Activated CD8-positive, alpha-beta T cell treated with anti-CD3 and anti-CD28 coated beads, Interleukin-2, amount 10 ng/mL, durations not matched to agents 7 days and 5 days (primary cell): ENCODE measurements at regions of chr16 and their contacts with region 1.

Region 1: DNA sequence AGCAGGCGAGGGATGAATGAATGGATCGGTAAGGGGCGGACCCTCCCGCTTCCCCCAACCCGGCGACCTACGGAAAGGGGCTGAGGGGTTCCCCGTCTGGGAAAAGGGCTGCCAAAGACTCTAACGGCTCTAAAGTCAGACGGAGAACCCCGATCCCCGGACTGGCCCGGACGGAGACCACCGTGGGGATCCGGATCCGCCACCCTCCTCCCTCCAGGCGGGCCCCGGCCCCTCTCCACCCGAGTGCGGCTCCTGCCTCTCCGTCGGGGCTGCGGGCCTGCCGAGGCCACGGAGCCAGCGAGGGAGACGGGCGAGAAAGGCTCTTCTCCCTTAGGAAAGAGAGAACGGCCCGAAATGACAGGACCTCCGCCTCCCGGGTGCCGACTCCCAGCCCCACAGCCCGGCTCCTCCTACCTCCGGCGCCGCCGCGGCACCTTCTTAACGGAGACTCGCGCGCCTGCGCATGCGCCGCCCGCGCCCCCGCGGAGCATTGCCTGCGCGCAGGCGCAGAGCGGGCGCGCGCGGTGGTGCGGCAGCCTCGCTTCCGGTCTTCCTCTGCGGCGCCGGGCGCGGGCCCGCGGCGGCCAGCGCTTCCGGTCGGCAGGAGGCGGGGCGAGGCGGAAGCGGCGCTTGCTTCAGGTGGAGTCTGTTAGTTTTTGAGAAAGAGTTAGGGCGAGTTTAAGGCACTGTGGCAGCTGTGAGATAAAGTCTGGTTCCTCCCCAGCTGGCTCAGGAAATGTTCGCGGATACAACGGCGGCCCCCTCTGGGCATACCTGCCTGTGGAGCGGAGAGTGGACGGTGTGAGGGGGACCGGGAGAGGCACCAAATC is at the start of gene SLX4:
- DNase-seq: peak; percentile 92
- ATAC-seq: peak; percentile 91
- H3K4me3 Mint-ChIP-seq: peak within 1 kb of the TSS; percentile 97
- H3K27ac Mint-ChIP-seq: peak within 1 kb of the TSS; percentile 98
- H3K4me1 Mint-ChIP-seq: peaks cover 61% of the 10 kb centered on the region
- H3K27me3 Mint-ChIP-seq: no peaks in the 10 kb centered on the region
- total RNA-seq, gene SLX4: 16.3 to 16.5 TPM

Region 2: GRCh38 chr16:3578610-3579551 is 32.5 kb before region 1 on chr16:
- CTCF ChIA-PET with region 1: interaction called, 5 read pairs
- POLR2A ChIA-PET with region 1: interaction called, 16 read pairs
- DNase-seq: peak; percentile 90
- ATAC-seq: peak; percentile 66
- H3K4me3 Mint-ChIP-seq: peak overlapping the region; percentile 96
- H3K27ac Mint-ChIP-seq: peak overlapping the region; percentile 99
- H3K4me1 Mint-ChIP-seq: peaks cover 59% of the 10 kb centered on the region
- H3K27me3 Mint-ChIP-seq: no peaks in the 10 kb centered on the region

Region 3: GRCh38 chr16:3625911-3626732 is 14.8 kb after region 1 on chr16:
- CTCF ChIA-PET with region 1: interaction called, 9 read pairs
- POLR2A ChIA-PET with region 1: interaction called, 17 read pairs
- DNase-seq: no peak
- ATAC-seq: peak; percentile 91
- H3K4me3 Mint-ChIP-seq: peak overlapping the region; percentile 50
- H3K27ac Mint-ChIP-seq: peak overlapping the region; percentile 88
- H3K4me1 Mint-ChIP-seq: peaks cover 27% of the 10 kb centered on the region
- H3K27me3 Mint-ChIP-seq: no peaks in the 10 kb centered on the region